Left cardiac atrium (tissue), 4 donors: ENCODE measurements at regions of chr1 and their contacts with region 1.

Region 1: GRCh38 chr1:117758444-117759316 is 152.8 kb downstream of the TENT5C start:
- DNase-seq: peak; percentile 62
- ATAC-seq: peak; percentile 96 to 97

Region 2: DNA sequence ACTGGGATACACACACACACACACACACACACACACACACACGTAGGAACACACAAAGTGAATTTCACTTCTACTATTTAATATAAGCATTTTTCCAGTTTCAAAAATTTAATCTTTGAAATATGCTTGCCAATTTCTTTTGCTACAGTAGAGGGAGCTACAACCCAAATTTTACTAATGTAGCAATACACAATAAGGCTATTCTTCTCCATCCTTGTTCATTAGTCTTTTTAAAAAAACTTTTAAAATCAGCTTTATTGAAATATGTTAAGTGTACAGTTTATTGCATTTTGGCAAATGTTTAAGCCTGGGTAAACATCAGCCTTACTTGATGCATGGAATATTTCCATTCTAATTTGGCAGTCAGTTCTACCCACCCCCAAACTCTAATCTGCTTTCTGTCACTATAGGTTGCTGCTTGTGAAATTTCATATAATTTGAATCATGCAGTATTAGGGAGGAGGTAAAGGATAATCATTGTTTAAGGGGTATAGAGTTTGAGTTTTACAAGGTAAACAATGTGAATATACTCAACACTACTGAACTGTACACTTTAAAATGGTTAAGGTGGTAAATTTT is 245.8 kb before region 1 on chr1:
- intact Hi-C with region 1: loop called in 1 of 2 experiments (anchors 5 kb)
- DNase-seq: no peak
- ATAC-seq: peak in 1 of 2 donors; percentile 50

Region 3: DNA sequence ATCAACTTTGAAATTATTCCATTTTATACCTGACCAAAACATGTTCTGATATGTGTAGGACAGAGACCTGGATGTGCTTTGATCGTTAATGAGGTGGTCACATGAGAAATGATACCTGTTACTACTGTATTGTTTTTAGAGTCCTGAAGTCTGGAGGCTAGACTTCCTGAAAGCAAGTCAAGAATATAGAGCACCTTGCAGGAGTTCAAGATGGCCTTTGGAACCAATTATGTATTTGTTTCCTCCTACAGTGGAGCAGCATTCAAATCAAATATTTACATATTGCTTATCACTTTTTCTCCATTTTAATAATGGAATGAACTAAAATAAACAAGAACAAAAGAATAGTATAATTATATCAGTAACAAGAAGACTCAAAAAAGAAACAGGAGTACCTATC is 235.6 kb before region 1 on chr1:
- intact Hi-C with region 1: loop called in 1 of 2 experiments (anchors 5 kb)
- DNase-seq: no peak
- ATAC-seq: no peak

Region 4: GRCh38 chr1:117534995-117535467 is 223.6 kb before region 1 on chr1:
- intact Hi-C with region 1: loop called (anchors 2 to 5 kb)
- DNase-seq: no peak
- ATAC-seq: peak; percentile 92 to 93

Region 5: GRCh38 chr1:117605774-117606648 is 152.7 kb before region 1 on chr1 and contains the start of gene TENT5C:
- intact Hi-C with region 1: loop called (anchors 5 to 10 kb)
- DNase-seq: peak; percentile 98
- ATAC-seq: peak; percentile 96 to 97
- total RNA-seq, gene TENT5C: 16.3 to 21.6 TPM

Region 6: GRCh38 chr1:117674521-117675397 is 83.9 kb before region 1 on chr1:
- intact Hi-C with region 1: loop called in 1 of 2 experiments (anchors 10 kb)
- DNase-seq: no peak
- ATAC-seq: no peak

Region 7: GRCh38 chr1:117783606-117784396 is 25.1 kb after region 1 on chr1:
- intact Hi-C with region 1: no loop called
- DNase-seq: no peak
- ATAC-seq: no peak

Region 8: GRCh38 chr1:117897551-117897950 is 138.9 kb after region 1 on chr1:
- intact Hi-C with region 1: no loop called
- DNase-seq: no peak
- ATAC-seq: no peak